Left colon (tissue), 2 donors: ENCODE measurements at regions of chr6 and their contacts with region 1.

Region 1: DNA sequence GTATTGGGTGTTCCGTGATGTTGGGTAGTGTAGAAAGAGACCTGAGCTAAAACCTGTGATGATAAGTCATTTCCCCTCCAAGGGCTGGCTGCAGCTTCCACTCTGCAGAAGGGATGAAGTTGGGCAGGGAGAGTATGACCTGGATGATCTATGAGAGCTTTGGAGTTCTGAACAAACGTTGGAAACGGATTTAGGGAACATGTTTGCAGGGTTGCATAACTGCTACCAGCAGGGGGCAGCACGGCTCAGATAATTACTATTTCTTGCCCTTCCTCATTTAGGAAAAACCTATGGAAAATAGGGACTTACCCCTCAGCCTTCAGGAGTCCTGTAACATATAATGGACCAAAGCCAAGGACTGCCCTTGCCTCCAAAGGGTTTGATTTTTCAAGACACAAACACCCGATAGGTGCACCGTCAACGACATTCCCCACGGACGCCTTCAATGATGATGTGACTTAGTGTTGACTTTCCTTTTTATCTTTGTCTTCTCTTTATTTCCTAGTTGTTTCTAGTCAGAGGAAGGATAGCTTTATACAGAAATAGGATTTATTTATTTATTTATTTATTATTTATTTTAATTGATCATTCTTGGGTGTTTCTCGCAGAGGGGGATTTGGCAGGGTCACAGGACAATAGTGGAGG is 164.9 kb upstream of the SASH1 start:
- DNase-seq: peak in 1 of 2 donors; percentile 79
- ATAC-seq: peak; percentile 31

Region 2: DNA sequence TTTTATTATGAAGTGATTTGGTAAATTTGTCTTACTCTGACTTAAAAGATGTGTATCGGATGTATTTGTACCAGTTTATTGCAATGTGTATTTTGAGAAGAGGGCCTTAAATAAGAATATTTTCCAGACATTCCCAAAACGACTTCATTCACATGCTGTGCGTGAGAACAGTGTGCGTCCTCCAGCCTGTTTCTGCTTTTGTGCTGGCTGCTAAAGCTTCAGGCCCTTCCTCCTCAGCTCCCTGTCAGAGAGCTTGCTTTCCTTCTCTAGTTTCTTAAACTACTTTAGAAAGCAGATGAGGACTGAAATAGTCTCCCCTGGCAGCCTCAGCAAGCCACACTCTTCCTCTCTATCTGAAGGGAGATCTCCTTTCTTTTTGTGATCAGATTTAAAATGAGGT is 511.5 kb before region 1 on chr6:
- intact Hi-C with region 1: no loop called
- DNase-seq: no peak
- ATAC-seq: no peak

Region 3: DNA sequence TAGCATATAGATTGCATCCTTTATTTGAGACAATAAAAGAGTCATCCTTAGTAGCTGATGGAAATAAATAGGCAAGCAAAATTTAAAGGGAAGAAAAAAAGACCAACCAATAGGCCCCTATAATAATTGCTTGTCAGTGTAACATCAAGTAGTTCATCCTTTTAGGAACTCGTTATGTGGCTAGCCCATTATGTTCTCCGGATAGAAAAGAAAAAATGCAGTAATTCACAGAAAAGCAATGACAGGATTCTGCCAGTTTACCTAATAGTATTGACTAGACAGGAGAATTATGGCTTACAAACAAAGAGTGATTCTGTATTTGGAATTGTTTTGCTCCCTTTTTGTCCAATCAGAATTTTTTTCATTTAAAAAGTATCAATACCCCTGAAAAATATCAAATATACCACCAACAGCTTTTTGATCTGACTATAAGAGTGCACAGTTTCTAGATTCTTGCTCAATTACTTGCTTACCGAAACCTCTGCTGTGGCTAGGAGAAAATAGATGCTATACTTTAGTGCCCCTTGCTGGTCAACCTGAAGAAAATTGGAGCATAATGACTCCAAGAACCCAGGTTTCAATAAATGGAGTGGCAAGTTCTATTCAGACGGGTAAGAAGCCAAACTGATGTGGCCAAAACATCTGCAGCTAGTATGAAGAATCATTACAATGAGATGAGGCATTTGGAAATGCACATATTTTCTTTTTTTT is 73.4 kb after region 1 on chr6:
- intact Hi-C with region 1: loop called in 1 of 2 experiments (anchors 5 kb)
- DNase-seq: no peak
- ATAC-seq: peak; percentile 51

Region 4: GRCh38 chr6:148464319-148465010 is 286.8 kb after region 1 on chr6:
- intact Hi-C with region 1: loop called (anchors 5 kb)
- DNase-seq: peak in 1 of 2 donors; percentile 62
- ATAC-seq: peak; percentile 58